ENCODE measurements at regions of chr9 and their contacts with region 1.

Region 1: GRCh38 chr9:98192503-98193335 is at the start of gene CORO2A:
- DNase-seq: peak in 1 of 2 donors; percentile 40
- H3K4me3 ChIP-seq: peak within 1 kb of the TSS; percentile 53 to 82 (median 69)
- H3K27ac ChIP-seq: peak within 1 kb of the TSS; percentile 87 to 90
- H3K4me1 ChIP-seq: peaks cover 0 to 7% of the 10 kb centered on the region in 2 donors
- H3K27me3 ChIP-seq: no peaks in the 10 kb centered on the region
- CTCF ChIP-seq: peak in 2 of 3 donors; percentile 24 to 43
- POLR2A ChIP-seq: no peak
- total RNA-seq, gene CORO2A: 1.4 to 7.2 (median 7.2) TPM

Region 2: DNA sequence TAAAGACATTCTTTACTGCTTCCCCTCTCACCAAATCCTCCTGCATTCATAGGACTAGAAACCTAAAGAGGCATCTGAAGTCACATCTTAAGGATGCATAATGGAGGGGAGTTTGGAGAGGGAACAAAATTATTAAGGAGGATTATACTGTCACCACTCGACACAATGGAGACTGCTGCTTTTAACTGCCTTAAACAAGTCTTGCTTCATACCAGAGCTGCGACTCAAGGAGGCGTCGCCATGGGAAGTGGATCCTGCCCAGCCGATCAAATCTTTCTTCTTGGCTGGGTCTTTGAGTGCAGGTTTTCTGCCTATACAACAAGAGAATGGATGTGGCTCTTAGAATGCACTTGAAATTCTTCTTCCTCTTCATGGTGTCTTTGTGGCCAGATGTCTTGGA is 406.4 kb before region 1 on chr9:
- intact Hi-C with region 1: no loop called
- DNase-seq: no peak
- H3K4me3 ChIP-seq: no peak overlapping the region
- H3K27ac ChIP-seq: no peak overlapping the region
- H3K4me1 ChIP-seq: no peaks in the 10 kb centered on the region
- H3K27me3 ChIP-seq: no peaks in the 10 kb centered on the region
- CTCF ChIP-seq: no peak
- POLR2A ChIP-seq: no peak

Region 3: DNA sequence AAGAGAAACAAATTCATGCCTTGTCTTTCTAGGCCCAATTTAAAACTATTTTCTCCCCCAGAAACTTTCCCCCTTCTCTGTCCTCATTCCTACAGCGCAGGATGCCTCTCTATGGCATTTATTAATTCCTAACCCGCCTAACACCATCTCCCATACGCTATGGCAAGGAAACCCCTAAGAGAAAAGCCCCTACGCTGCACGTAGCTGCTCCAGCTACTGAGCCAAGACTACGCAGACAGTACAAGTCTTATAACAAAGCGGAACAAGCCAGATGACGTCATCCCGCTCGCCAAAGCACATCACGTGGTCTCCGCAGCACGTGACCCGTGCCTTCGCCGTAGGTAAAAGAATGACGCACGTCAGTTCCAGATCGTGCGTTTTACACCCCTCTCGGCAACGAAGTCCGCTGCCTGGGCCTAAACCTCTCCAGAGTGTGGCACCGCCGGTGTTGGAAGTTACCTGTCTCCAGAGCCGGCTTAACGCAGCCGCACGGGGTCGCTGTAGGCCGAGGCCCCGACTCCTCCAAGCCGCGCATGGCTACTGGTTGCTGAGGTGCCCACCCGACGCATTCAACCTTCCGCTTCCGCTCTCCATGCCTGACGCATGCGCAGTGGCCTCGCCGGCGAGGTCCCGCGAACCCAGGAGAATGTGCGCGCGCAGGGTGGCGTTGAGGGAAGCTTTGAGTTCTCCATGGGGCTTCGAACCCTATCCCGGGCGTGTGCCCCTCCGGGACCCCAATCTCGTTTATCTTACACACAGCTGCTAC is 270.6 kb before region 1 on chr9 and contains the start of gene TRMO:
- intact Hi-C with region 1: loop called (anchors 2 kb)
- DNase-seq: peak; percentile 97
- H3K4me3 ChIP-seq: peak within 1 kb of the TSS; percentile 56 to 89 (median 69)
- H3K27ac ChIP-seq: peak within 1 kb of the TSS; percentile 100
- H3K4me1 ChIP-seq: peaks cover 0 to 8% of the 10 kb centered on the region in 2 donors
- H3K27me3 ChIP-seq: no peaks in the 10 kb centered on the region
- CTCF ChIP-seq: peak; percentile 28 to 74 (median 68)
- POLR2A ChIP-seq: peak; percentile 96
- total RNA-seq, gene TRMO: 29.8 to 46.8 (median 35.4) TPM

Region 4: GRCh38 chr9:97990266-97990665 is 202.5 kb before region 1 on chr9:
- intact Hi-C with region 1: no loop called
- DNase-seq: no peak
- H3K4me3 ChIP-seq: no peak overlapping the region
- H3K27ac ChIP-seq: no peak overlapping the region
- H3K4me1 ChIP-seq: peaks cover 0 to 7% of the 10 kb centered on the region in 2 donors
- H3K27me3 ChIP-seq: no peaks in the 10 kb centered on the region
- CTCF ChIP-seq: no peak
- POLR2A ChIP-seq: no peak

Region 5: GRCh38 chr9:98164912-98165311 is 27.8 kb before region 1 on chr9:
- intact Hi-C with region 1: loop called (anchors 1 kb)
- DNase-seq: peak in 1 of 2 donors; percentile 31
- H3K4me3 ChIP-seq: no peak overlapping the region
- H3K27ac ChIP-seq: no peak overlapping the region
- H3K4me1 ChIP-seq: no peaks in the 10 kb centered on the region
- H3K27me3 ChIP-seq: no peaks in the 10 kb centered on the region
- CTCF ChIP-seq: no peak
- POLR2A ChIP-seq: no peak

Region 6: GRCh38 chr9:98255578-98256296 is 63.0 kb after region 1 on chr9 and contains the start of gene TBC1D2:
- intact Hi-C with region 1: loop called (anchors 10 kb)
- DNase-seq: peak; percentile 96 to 97
- H3K4me3 ChIP-seq: peak within 1 kb of the TSS; percentile 74 to 91 (median 85)
- H3K27ac ChIP-seq: peak within 1 kb of the TSS; percentile 95 to 96
- H3K4me1 ChIP-seq: peaks cover 0 to 7% of the 10 kb centered on the region in 2 donors
- H3K27me3 ChIP-seq: no peaks in the 10 kb centered on the region
- CTCF ChIP-seq: peak in 2 of 3 donors; percentile 20 to 43
- POLR2A ChIP-seq: no peak
- total RNA-seq, gene TBC1D2: 10.8 to 17.1 (median 13.6) TPM

Measured in breast epithelium (tissue), 4 donors.